PC-3 (cell line): ENCODE measurements at regions of chr19 and their contacts with region 1.

Region 1: DNA sequence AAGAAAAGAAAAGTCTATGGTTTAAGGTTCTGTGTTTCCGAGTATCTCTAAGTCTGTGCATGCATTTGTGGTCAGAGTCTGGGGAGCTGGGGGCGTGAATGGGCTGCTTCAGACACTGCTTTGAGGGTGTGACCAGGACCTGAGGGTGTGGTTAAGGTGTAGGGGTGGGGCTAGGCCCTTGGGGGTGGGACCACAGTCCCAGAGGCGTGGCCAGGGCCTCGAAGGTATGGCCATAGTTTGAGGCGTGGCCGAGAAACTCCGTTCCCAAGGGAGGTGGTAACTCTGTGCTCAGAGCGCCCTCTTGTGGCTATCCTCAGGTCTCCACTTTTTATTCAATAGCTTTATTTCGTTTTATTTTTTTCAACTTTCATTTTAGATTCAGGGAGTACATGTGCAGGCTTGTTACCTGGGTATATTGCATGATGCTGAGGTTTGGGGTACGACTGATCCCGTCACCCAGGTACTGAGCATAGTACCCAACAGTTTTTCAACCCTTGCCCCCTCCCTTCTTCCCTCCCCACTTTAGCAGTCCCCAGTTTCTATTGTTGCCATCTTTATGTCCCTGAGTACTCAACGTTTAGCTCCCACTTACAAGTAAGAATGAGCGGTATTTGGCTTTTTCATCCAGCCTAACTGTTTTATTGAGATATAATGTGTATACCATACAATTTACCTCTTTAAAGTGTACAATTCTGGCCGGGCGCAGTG is 7.0 kb upstream of the CBLC start:
- DNase-seq: peak; percentile 97
- ATAC-seq: peak; percentile 94
- H3K4me3 ChIP-seq: peak overlapping the region; percentile 37; the same call in 1 of the 2 replicates
- H3K27ac ChIP-seq: no peak overlapping the region
- H3K4me1 ChIP-seq: peaks cover 28% of the 10 kb centered on the region
- H3K27me3 ChIP-seq: no peaks in the 10 kb centered on the region
- CTCF ChIP-seq: peak; percentile 76

Region 2: GRCh38 chr19:44587963-44588770 is 182.5 kb before region 1 on chr19:
- CTCF ChIA-PET with region 1: interaction called, 10 read pairs
- POLR2A ChIA-PET with region 1: no interaction called
- intact Hi-C with region 1: loop called (anchors 1 kb)
- DNase-seq: peak; percentile 86
- ATAC-seq: peak; percentile 86
- H3K4me3 ChIP-seq: peak overlapping the region; percentile 58
- H3K27ac ChIP-seq: peak overlapping the region; percentile 90
- H3K4me1 ChIP-seq: peaks cover 38% of the 10 kb centered on the region
- H3K27me3 ChIP-seq: no peaks in the 10 kb centered on the region
- CTCF ChIP-seq: peak; percentile 46

Region 3: DNA sequence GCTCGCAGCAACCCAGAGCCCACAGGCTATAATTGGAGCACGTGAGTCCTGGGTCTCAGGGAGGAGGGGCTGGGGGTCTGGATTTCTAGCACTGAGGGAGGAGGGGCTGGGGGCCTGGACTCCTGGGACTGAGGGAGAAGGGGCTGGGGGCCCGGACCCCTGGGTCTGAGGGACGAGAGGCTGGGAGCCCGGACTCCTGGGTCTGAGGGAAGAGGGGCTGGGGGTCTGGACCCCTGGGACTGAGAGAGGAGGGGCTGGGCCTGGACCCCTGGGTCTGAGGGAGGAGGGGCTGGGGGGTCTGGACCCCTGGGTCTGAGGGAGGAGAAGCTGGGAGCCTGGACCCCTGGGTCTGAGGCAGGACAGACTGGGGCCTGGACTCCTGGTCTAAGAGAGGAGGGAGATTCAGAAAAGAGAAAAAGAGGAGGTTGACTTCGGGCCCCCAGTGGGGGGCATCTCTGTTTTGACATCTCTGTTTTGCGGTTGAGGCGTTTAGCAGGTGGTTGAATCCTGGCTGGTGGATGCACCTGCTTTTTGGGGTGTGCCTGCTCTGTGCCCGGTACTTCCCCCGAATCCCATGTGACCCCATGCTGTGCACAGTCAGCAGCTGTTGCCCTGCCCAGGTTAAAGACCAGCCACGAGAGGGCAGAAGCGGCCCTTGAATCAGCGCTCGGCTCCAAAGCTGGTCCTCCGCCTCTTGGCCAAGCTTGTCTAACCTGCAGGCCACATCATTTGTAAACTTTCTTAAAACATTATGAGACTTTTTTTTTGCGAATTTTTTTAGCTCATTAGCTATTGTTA is 116.5 kb before region 1 on chr19:
- CTCF ChIA-PET with region 1: interaction called, 4 read pairs
- POLR2A ChIA-PET with region 1: no interaction called
- intact Hi-C with region 1: loop called (anchors 5 kb)
- DNase-seq: peak; percentile 48
- ATAC-seq: peak; percentile 75
- H3K4me3 ChIP-seq: no peak overlapping the region
- H3K27ac ChIP-seq: no peak overlapping the region
- H3K4me1 ChIP-seq: peaks cover under 1% of the 10 kb centered on the region; the same call in 1 of the 2 replicates
- H3K27me3 ChIP-seq: no peaks in the 10 kb centered on the region
- CTCF ChIP-seq: peak; percentile 57

Region 4: GRCh38 chr19:44689056-44689895 is 81.4 kb before region 1 on chr19:
- CTCF ChIA-PET with region 1: interaction called, 6 read pairs
- POLR2A ChIA-PET with region 1: interaction called, 3 read pairs
- intact Hi-C with region 1: loop called (anchors 1 kb)
- DNase-seq: peak; percentile 64
- ATAC-seq: peak; percentile 48
- H3K4me3 ChIP-seq: no peak overlapping the region
- H3K27ac ChIP-seq: no peak overlapping the region
- H3K4me1 ChIP-seq: peaks cover 38% of the 10 kb centered on the region
- H3K27me3 ChIP-seq: no peaks in the 10 kb centered on the region
- CTCF ChIP-seq: peak; percentile 79

Region 5: DNA sequence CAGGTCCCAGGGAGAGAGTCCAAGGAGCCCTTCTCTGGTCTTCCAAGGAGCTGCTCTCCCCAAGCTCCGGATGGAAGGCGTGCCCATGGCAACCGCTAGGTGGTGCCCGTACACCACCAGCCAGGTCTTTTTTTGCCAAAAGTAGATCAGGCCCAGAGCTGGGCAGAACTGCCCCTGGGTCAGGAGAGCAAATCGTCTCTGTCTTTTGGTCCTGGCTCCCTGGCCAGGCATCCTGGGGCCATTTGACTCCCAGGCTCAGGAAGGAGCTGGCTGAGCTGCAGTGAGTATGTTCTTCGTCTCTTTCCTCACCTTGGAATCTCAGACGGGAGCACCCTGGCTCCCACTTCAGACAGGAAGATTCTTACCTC is 46.8 kb before region 1 on chr19:
- CTCF ChIA-PET with region 1: interaction called, 53 read pairs
- POLR2A ChIA-PET with region 1: interaction called, 3 read pairs
- intact Hi-C with region 1: loop called (anchors 1 kb)
- DNase-seq: peak; percentile 86
- ATAC-seq: peak; percentile 84
- H3K4me3 ChIP-seq: no peak overlapping the region
- H3K27ac ChIP-seq: peak overlapping the region; percentile 76
- H3K4me1 ChIP-seq: peaks cover 28% of the 10 kb centered on the region
- H3K27me3 ChIP-seq: no peaks in the 10 kb centered on the region
- CTCF ChIP-seq: peak; percentile 89

Region 6: DNA sequence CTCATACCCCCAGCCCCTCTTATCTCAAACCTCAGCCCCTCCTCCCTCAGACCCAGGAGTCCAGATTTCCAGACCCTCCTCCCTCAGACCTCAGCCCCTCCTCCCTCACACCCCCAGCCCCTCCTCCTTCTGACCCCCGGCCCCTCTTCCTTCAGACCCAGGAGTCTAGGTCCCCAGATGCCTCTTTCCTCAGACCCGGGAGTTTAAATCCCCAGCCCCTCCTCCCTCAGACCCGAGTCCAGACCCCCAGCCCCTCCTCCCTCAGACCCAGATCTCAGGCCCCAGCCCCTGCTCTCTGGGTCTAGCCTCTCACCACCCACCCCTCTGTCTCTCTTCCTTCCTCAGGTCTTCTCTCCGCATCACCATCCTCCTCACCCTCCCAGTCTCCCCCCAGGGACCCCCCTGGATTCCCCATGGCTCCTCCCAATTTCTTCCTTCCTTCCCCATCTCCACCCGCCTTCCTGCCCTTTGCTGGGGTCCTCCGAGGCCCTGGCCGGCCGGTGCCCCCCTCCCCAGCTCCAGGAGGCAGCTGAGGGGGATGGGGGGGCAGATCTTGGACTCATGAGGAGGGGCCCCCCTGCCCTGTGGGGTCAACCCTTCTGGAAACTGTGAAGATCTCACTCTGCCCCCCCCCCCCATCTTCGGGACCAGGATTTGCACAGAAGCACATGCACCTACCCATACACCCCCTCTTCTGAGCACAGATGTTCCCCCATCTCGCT is 11.5 kb before region 1 on chr19:
- CTCF ChIA-PET with region 1: no interaction called
- POLR2A ChIA-PET with region 1: no interaction called
- intact Hi-C with region 1: no loop called
- DNase-seq: no peak
- ATAC-seq: no peak
- H3K4me3 ChIP-seq: no peak overlapping the region
- H3K27ac ChIP-seq: no peak overlapping the region
- H3K4me1 ChIP-seq: peaks cover 11% of the 10 kb centered on the region
- H3K27me3 ChIP-seq: no peaks in the 10 kb centered on the region
- CTCF ChIP-seq: no peak

Region 7: DNA sequence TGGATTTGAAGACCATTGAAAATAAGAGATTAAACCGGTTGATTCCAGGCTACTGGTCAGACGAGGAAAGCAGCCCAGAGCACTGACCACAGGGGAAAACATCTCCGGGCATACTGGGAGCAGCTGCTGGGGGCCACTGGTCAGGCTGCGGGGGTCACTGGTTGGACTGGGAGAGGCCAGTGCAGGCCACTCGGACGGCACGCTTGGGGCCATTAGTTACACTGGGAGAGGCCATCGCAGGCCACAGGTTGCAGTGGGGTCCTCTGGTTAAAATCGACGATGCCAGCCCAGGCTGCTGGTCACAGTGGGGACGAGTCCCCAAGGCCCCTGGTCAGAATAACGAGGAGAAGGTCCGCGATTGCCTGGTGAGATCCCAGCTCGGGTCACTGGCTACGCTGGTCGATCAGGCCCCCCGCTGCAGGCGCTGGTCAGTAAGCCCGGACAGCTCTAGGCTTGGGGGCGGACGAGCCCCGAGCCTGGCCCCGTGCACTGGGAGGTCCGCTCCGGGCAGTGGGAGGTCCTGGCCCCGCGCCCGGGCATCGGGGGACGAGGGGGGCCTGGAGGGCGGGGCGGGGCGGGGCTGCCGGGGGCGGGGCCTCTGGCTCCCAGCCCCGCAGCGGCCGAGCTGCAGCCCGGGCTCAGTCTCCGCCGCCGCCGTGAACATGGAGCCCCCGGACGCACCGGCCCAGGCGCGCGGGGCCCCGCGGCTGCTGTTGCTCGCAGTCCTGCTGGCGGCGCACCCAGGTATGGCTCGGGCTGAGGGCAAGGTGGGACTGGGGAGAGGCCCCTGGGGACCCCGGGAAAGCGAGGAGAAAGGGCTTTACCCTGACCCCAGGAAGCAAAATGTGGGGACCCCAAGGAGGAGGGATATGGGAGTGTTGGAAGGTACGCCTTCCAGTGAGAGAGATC is 38.0 kb after region 1 on chr19 and contains the start of gene BCAM:
- CTCF ChIA-PET with region 1: interaction called, 3 read pairs
- POLR2A ChIA-PET with region 1: interaction called, 3 read pairs
- intact Hi-C with region 1: loop called (anchors 5 kb)
- DNase-seq: peak; percentile 58
- ATAC-seq: peak; percentile 48
- H3K4me3 ChIP-seq: peak within 1 kb of the TSS; percentile 78
- H3K27ac ChIP-seq: no peak within 1 kb of the TSS
- H3K4me1 ChIP-seq: peaks cover 28% of the 10 kb centered on the region
- H3K27me3 ChIP-seq: no peaks in the 10 kb centered on the region
- CTCF ChIP-seq: no peak
- total RNA-seq, gene BCAM: 12.9 and 18.7 TPM in 2 replicates

Region 8: GRCh38 chr19:44820648-44821609 is 50.2 kb after region 1 on chr19:
- CTCF ChIA-PET with region 1: no interaction called
- POLR2A ChIA-PET with region 1: no interaction called
- intact Hi-C with region 1: no loop called
- DNase-seq: no peak
- ATAC-seq: no peak
- H3K4me3 ChIP-seq: no peak overlapping the region
- H3K27ac ChIP-seq: no peak overlapping the region
- H3K4me1 ChIP-seq: no peaks in the 10 kb centered on the region
- H3K27me3 ChIP-seq: no peaks in the 10 kb centered on the region
- CTCF ChIP-seq: no peak

Region 9: GRCh38 chr19:45069056-45069455 is 298.4 kb after region 1 on chr19:
- CTCF ChIA-PET with region 1: no interaction called
- POLR2A ChIA-PET with region 1: no interaction called
- intact Hi-C with region 1: no loop called
- DNase-seq: peak; percentile 24
- ATAC-seq: peak; percentile 57
- H3K4me3 ChIP-seq: no peak overlapping the region
- H3K27ac ChIP-seq: no peak overlapping the region
- H3K4me1 ChIP-seq: no peaks in the 10 kb centered on the region
- H3K27me3 ChIP-seq: no peaks in the 10 kb centered on the region
- CTCF ChIP-seq: no peak